ENCODE measurements at regions of chr2 and their contacts with region 1.

Region 1: GRCh38 chr2:187453078-187453641 is 5.1 kb upstream of the CALCRL start:
- DNase-seq: no peak
- ATAC-seq: peak in 1 of 4 donors; percentile 56
- H3K4me3 ChIP-seq: no peak overlapping the region
- H3K27ac ChIP-seq: no peak overlapping the region
- H3K4me1 ChIP-seq: no peaks in the 10 kb centered on the region
- H3K27me3 ChIP-seq: no peaks in the 10 kb centered on the region
- CTCF ChIP-seq: no peak

Region 2: GRCh38 chr2:186853951-186854350 is 599.2 kb before region 1 on chr2:
- intact Hi-C with region 1: loop called in 1 of 3 experiments (anchors 10 kb)
- DNase-seq: no peak
- ATAC-seq: no peak
- H3K4me3 ChIP-seq: no peak overlapping the region
- H3K27ac ChIP-seq: no peak overlapping the region
- H3K4me1 ChIP-seq: no peaks in the 10 kb centered on the region
- H3K27me3 ChIP-seq: no peaks in the 10 kb centered on the region
- CTCF ChIP-seq: no peak

Region 3: DNA sequence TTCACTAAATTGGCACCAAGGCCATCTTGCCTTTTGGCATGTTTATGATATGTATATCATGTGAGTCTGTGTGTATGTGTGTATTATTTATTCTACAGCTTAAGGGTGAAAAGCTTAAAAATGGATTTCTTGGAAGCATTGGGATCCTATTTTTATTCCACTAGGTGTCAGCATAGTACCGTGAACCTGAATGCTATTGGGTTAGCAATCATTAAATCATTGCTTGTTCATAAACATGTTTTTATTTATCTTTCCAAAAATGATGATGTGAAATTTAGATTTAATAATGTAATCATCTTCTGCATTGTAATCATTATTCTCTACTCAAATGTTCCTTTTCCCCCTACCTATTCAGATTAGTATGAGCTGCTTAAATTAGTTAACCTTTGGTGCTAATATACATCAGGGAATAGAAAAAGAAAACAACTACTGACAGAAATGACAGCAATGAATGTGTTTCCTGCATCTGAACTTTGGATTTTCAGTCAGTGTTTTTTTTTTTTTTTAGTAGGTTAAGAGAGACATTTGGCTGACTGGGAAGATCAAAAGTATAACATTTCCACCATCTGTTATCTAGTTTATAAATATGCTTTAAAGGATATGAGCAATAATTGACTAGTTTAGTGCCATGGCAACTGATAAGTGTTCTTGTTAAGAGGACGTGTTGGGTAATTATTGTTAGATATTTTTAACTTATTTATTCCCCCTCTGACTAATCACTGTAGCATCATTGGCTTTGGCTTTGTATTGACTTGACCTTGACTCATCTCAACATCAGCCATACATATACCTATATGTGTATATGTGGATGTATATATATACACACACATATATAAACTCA is 590.1 kb before region 1 on chr2:
- intact Hi-C with region 1: loop called in 2 of 3 experiments (anchors 10 kb)
- DNase-seq: no peak
- ATAC-seq: peak in 3 of 4 donors; percentile 53 to 63 (median 55)
- H3K4me3 ChIP-seq: no peak overlapping the region
- H3K27ac ChIP-seq: no peak overlapping the region
- H3K4me1 ChIP-seq: no peaks in the 10 kb centered on the region
- H3K27me3 ChIP-seq: no peaks in the 10 kb centered on the region
- CTCF ChIP-seq: peak; percentile 14 to 42 (median 35)

Region 4: GRCh38 chr2:187177253-187177652 is 275.9 kb before region 1 on chr2:
- intact Hi-C with region 1: no loop called
- DNase-seq: no peak
- ATAC-seq: no peak
- H3K4me3 ChIP-seq: no peak overlapping the region
- H3K27ac ChIP-seq: no peak overlapping the region
- H3K4me1 ChIP-seq: no peaks in the 10 kb centered on the region
- H3K27me3 ChIP-seq: no peaks in the 10 kb centered on the region
- CTCF ChIP-seq: no peak

Measured in pancreas (tissue), 10 donors.